ENCODE measurements at regions of chr7 and their contacts with region 1.

Region 1: DNA sequence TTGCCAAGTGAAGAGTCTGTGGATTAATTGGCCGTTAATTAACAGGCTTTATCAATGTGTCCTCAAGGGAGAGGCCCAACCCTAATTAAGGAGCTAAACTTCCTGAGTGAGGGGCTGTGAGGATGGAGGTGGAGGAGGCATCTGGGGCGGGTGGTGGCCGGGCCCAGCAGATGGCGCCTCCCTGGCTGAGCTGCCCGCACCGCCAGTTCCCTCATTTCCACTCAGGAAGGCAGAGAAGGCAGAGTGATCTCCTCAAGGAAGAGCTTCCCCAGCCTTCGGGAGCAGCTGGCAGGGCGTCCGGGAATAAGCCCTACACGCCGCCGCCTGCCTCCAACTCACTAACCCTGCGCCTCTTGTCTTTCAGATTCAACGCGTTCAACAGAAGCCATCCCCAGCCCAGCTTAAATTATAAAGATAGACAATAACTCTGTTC is 112.2 kb downstream of the CYTH3 start:
- DNase-seq: peak; percentile 51 to 84
- H3K4me3 ChIP-seq: no peak overlapping the region
- H3K27ac ChIP-seq: peak overlapping the region in 4 of 5 donors; percentile 10 to 63 (median 35)
- H3K4me1 ChIP-seq: peaks cover 0 to 22% (median 9%) of the 10 kb centered on the region in 4 donors
- H3K27me3 ChIP-seq: no peaks in the 10 kb centered on the region
- CTCF ChIP-seq: peak in 5 of 7 experiments; percentile 48 to 75 (median 58)
- EP300 ChIP-seq: no peak
- POLR2A ChIP-seq: no peak

Region 2: DNA sequence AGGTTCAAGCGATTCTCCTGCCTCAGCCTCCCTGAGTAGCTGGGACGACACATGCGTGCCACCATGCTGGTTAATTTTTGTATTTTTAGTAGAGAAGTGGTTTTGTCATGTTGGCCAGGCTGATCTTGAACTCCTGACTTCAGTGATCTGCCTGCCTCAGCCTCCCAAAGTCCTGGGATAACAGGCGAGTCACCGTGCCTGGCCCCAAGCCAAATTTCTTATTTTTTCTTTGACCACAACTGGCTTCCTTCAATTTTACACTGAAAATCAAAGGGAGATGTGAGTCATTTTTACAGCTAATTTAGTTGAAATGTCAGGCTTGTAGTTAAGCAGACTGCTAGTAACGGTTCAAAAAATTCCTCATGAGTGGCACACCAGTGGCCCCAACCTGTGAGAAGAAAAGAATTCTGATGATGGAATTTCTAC is 386.5 kb before region 1 on chr7:
- intact Hi-C with region 1: no loop called
- DNase-seq: peak in 1 of 2 donors; percentile 20
- H3K4me3 ChIP-seq: no peak overlapping the region
- H3K27ac ChIP-seq: no peak overlapping the region
- H3K4me1 ChIP-seq: peaks cover 3 to 63% (median 20%) of the 10 kb centered on the region in 4 donors
- H3K27me3 ChIP-seq: no peaks in the 10 kb centered on the region
- CTCF ChIP-seq: no peak
- EP300 ChIP-seq: no peak
- POLR2A ChIP-seq: no peak

Region 3: GRCh38 chr7:6272481-6273323 is 112.5 kb after region 1 on chr7 and contains the start of gene CYTH3:
- intact Hi-C with region 1: no loop called
- DNase-seq: peak; percentile 87 to 95
- H3K4me3 ChIP-seq: peak within 1 kb of the TSS; percentile 73 to 97 (median 95)
- H3K27ac ChIP-seq: peak within 1 kb of the TSS; percentile 66 to 89 (median 80)
- H3K4me1 ChIP-seq: peaks cover 30 to 50% (median 43%) of the 10 kb centered on the region in 4 donors
- H3K27me3 ChIP-seq: no peaks in the 10 kb centered on the region
- CTCF ChIP-seq: no peak
- EP300 ChIP-seq: no peak
- POLR2A ChIP-seq: no peak
- total RNA-seq, gene CYTH3: 13.3 to 33.8 (median 19.0) TPM

Region 4: GRCh38 chr7:6323967-6324701 is 163.9 kb after region 1 on chr7:
- intact Hi-C with region 1: loop called (anchors 5 kb)
- DNase-seq: no peak
- H3K4me3 ChIP-seq: no peak overlapping the region
- H3K27ac ChIP-seq: no peak overlapping the region
- H3K4me1 ChIP-seq: peaks cover 0 to 7% (median 0%) of the 10 kb centered on the region in 4 donors
- H3K27me3 ChIP-seq: no peaks in the 10 kb centered on the region
- CTCF ChIP-seq: no peak
- EP300 ChIP-seq: no peak
- POLR2A ChIP-seq: no peak